ENCODE measurements at regions of chr1 and their contacts with region 1.

Region 1: GRCh38 chr1:214328770-214329469 is 48.0 kb downstream of the SMYD2 start:
- DNase-seq: peak in 2 of 3 donors; percentile 85 to 90
- ATAC-seq: peak; percentile 95
- H3K4me3 ChIP-seq: no peak overlapping the region
- H3K4me1 ChIP-seq: no peaks in the 10 kb centered on the region
- CTCF ChIP-seq: peak; percentile 70

Region 2: DNA sequence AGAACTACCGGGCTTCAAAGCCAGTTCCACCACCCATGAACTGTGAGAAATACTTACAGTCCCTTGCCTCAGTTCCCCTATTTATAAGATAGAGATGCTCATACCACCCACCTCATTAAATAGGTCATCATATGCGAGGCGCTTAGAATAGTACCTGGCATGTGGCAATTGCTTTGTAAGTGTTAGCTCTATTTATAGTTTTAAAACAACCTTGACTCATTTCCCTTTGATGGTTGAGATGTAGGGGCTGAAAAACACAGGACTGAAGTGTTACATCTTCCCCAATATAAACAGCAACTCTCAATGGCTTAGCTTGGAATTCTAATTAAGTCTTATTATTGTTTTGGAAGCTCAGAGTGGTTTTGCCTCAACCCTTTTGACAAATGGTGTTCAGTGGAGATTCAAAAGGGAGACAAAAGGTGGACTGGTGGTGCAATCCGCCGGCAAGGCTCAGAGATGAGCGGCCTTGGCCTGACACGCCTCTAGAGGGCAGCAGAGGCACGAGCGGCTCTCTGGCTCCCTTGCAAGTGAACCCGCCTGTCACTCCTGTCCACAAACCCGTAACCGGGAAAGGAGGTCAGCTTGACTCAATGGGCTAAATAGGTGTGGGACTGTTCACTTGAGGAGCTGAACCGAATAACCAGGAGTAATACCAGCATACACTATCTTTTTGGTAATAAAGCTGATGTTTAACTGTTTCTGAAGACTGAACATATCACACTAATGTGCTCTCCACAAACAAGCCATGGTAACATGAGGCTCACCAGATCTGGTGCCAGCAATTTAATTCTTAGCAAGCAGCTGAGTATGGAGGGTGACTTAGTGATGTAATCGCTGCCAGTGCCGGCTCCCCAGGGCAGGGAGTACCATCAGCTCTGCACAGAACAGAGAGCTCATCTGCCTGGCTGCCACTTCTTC is 67.5 kb before region 1 on chr1:
- intact Hi-C with region 1: loop called (anchors 2 to 5 kb)
- DNase-seq: peak; percentile 73 to 90 (median 87)
- ATAC-seq: peak; percentile 96
- H3K4me3 ChIP-seq: no peak overlapping the region
- H3K4me1 ChIP-seq: no peaks in the 10 kb centered on the region
- CTCF ChIP-seq: peak; percentile 94

Region 3: GRCh38 chr1:214514032-214514818 is 185.3 kb after region 1 on chr1:
- intact Hi-C with region 1: no loop called
- DNase-seq: no peak
- ATAC-seq: no peak
- H3K4me3 ChIP-seq: no peak overlapping the region
- H3K4me1 ChIP-seq: no peaks in the 10 kb centered on the region
- CTCF ChIP-seq: no peak

Region 4: GRCh38 chr1:214584805-214585766 is 256.2 kb after region 1 on chr1:
- intact Hi-C with region 1: loop called (anchors 5 kb)
- DNase-seq: no peak
- ATAC-seq: peak; percentile 58
- H3K4me3 ChIP-seq: no peak overlapping the region
- H3K4me1 ChIP-seq: no peaks in the 10 kb centered on the region
- CTCF ChIP-seq: peak; percentile 23

Region 5: GRCh38 chr1:215095562-215095961 is 766.6 kb after region 1 on chr1:
- intact Hi-C with region 1: no loop called
- DNase-seq: no peak
- ATAC-seq: no peak
- H3K4me3 ChIP-seq: no peak overlapping the region
- H3K4me1 ChIP-seq: no peaks in the 10 kb centered on the region
- CTCF ChIP-seq: no peak